ENCODE measurements at regions of chr22 and their contacts with region 1.

Region 1: GRCh38 chr22:36239401-36240171 is at the start of gene APOL2:
- DNase-seq: peak; percentile 87
- H3K4me3 Mint-ChIP-seq: peak within 1 kb of the TSS; percentile 95
- H3K27ac Mint-ChIP-seq: peak within 1 kb of the TSS; percentile 93
- H3K4me1 Mint-ChIP-seq: peaks cover 35% of the 10 kb centered on the region
- H3K27me3 Mint-ChIP-seq: no peaks in the 10 kb centered on the region
- total RNA-seq, gene APOL2: 54.7 and 55.4 TPM in 2 replicates

Region 2: GRCh38 chr22:35648066-35649025 is 591.2 kb before region 1 on chr22 and contains the start of gene APOL6:
- intact Hi-C with region 1: loop called (anchors 2 kb)
- DNase-seq: peak; percentile 69
- H3K4me3 Mint-ChIP-seq: peak within 1 kb of the TSS; percentile 99
- H3K27ac Mint-ChIP-seq: peak within 1 kb of the TSS; percentile 100
- H3K4me1 Mint-ChIP-seq: peaks cover 21% of the 10 kb centered on the region
- H3K27me3 Mint-ChIP-seq: no peaks in the 10 kb centered on the region
- total RNA-seq, gene APOL6: 21.2 and 21.9 TPM in 2 replicates

Region 3: GRCh38 chr22:36156515-36157419 is 82.8 kb before region 1 on chr22:
- intact Hi-C with region 1: loop called (anchors 2 kb)
- DNase-seq: peak; percentile 29
- H3K4me3 Mint-ChIP-seq: peak overlapping the region; percentile 90
- H3K27ac Mint-ChIP-seq: peak overlapping the region; percentile 95
- H3K4me1 Mint-ChIP-seq: peaks cover 74% of the 10 kb centered on the region
- H3K27me3 Mint-ChIP-seq: no peaks in the 10 kb centered on the region

Region 4: DNA sequence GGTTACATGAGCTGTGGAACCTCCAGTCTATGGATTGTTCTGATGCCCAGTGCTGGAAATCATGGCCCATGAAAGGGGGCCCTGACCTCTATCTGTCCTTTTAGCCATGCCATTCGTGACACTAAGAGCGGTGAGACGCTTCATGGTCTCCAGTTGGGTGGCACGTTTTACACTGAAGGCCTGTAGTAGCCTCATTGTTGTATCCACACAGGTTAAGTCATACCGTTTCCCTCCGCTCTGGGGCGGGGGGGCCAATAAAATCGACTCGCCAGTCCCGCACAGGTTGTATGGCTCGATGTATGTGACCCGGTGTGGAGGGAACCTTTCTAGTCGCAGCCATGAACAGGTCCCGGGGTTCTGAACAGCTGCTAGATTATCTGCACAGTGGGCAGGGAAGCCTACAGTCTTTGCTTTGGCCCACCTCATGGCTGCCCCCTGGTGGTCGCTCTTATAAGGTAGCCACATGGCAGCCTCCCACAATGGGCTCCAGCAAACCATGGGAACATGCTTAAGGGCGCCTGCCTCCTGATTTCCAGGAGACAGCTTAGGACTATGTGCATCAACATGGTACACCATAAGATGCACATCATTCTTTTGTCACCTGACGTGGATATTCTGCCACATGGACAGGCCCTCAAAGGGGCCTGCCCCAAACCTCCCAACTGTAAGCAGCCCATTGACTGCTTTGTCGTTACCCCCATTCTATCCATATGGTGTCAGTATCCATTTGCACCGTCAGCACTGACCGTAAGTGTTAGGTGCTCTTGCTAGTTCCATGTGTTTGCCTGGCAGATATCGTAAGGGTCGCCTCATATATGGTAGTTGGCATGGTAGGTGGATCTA is 59.3 kb before region 1 on chr22:
- intact Hi-C with region 1: no loop called
- DNase-seq: peak; percentile 68
- H3K4me3 Mint-ChIP-seq: no peak overlapping the region
- H3K27ac Mint-ChIP-seq: no peak overlapping the region
- H3K4me1 Mint-ChIP-seq: peaks cover 3% of the 10 kb centered on the region
- H3K27me3 Mint-ChIP-seq: peaks cover 5% of the 10 kb centered on the region

Region 5: DNA sequence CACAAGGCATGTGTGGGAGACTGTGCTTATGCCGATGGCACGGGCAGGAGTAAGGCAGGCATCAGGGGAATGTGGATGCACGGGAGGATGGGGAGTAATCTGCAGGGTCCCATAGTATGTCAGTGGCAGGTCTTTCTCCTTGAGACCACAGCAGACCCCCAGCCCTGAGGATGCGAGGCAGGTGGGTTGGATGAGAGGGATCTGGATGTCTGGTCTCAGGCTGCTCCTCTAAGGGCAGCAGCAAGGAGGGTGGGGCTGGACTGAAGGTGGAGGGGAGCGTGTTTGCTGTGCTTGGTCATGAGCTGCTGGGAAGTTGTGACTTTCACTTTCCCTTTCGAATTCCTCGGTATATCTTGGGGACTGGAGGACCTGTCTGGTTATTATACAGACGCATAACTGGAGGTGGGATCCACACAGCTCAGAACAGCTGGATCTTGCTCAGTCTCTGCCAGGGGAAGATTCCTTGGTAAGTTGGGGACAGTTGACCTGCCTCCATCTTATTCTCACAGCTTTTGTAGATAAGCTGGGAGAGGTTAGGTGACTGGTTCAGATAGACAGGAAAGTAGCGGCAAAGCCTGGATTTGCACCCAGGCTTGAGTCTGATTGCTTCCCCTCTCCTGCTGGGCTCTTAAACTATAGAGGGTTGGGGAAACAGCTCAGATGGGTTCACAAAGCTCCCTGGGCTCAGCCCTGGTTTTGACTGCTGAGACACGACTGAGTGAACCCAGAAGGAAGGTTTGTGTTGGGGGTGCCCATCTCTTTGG is 13.3 kb after region 1 on chr22 and contains the start of gene APOL1:
- intact Hi-C with region 1: loop called (anchors 1 kb)
- DNase-seq: peak; percentile 59
- H3K4me3 Mint-ChIP-seq: peak within 1 kb of the TSS; percentile 93
- H3K27ac Mint-ChIP-seq: peak within 1 kb of the TSS; percentile 88
- H3K4me1 Mint-ChIP-seq: peaks cover 46% of the 10 kb centered on the region
- H3K27me3 Mint-ChIP-seq: no peaks in the 10 kb centered on the region
- total RNA-seq, gene APOL1: 28.5 and 31.5 TPM in 2 replicates

Region 6: DNA sequence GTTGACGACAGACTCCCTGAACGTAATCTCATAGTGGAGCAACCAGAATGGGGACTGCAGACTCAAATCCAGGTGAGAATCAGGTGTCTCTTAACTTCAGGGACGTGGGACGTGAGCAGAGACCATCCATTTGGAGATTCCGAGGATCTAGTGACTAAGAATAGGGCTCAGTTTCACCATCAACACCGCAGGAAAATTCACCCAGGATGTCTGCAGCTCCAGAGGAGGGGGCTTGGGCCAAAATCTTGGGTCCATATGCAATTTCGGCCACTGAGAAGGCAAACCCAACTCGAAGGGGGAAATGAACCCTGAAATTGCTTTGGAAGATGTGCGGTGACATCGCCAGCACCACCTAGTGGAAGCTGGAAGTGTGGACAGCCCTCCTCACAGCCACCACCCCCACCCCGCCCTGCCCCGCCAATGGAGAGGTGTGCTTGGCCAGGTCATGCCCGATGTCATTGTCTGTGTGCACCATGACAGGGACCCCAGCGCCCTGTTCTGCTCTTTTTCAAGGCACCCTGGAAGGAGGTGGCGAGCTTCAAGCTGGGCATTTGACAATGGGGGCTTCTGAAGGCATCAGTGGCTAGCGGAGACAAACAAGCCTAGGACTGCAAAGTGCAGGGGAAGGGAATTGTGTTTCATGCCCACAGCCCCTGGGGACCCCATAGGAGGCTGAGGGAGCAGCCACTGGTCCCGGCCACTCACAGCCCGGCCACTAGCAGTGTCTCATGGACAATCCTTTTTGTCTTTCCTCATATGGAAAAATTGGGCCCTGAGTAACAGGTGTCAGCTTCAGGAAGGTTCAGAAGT is 38.1 kb after region 1 on chr22:
- intact Hi-C with region 1: loop called (anchors 2 kb)
- DNase-seq: peak; percentile 45
- H3K4me3 Mint-ChIP-seq: no peak overlapping the region
- H3K27ac Mint-ChIP-seq: peak overlapping the region; percentile 40
- H3K4me1 Mint-ChIP-seq: peaks cover 4% of the 10 kb centered on the region
- H3K27me3 Mint-ChIP-seq: no peaks in the 10 kb centered on the region

Region 7: DNA sequence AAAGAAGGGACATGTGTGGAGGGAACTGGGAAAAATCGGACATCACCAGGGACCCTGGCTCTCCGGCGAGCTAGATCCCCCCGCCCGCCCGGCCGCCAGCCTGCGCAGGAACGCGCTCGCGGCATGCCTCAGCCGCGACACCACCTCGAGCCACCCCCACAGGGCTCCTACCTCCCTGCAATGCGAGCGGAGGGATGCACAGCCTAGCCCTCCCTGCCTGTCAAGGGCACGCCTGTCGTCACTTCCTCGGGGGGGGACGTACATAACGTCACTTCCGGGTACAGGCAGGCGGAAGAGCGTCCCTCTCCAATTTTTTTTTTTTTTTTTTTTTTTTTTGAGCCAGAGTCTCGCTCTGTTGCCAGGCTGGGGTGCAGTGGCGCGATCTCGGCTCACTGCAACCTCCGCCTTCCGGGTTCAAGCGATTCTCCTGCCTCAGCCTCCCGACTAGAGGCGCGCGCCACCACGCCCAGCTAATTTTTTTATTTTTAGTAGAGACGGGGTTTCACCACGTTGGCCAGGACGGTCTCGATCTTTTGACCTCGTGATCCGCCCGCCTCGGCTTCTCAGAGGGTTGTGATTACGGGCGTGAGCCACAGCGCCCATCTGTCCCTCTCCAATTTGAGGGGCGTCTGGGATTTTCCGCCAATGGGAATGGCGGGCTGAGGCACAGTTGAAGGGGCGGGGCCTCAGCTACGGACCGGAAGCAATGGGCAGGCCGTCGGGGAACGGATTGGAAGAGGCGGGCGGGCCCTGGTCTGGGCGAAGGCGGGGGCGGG is 242.0 kb after region 1 on chr22 and contains the start of gene TXN2:
- intact Hi-C with region 1: loop called (anchors 1 kb)
- DNase-seq: peak; percentile 92
- H3K4me3 Mint-ChIP-seq: peak within 1 kb of the TSS; percentile 97
- H3K27ac Mint-ChIP-seq: peak within 1 kb of the TSS; percentile 94
- H3K4me1 Mint-ChIP-seq: peaks cover 12% of the 10 kb centered on the region
- H3K27me3 Mint-ChIP-seq: no peaks in the 10 kb centered on the region
- total RNA-seq, gene TXN2: 94.0 and 95.1 TPM in 2 replicates